Activated naive CD4-positive, alpha-beta T cell treated with anti-CD3 and anti-CD28 coated beads, Interleukin-2, amount 10 ng/mL, durations not matched to agents 7 days and 5 days (primary cell): ENCODE measurements at regions of chr15 and their contacts with region 1.

Region 1: GRCh38 chr15:44711356-44712107 is at the start of gene B2M:
- DNase-seq: peak; percentile 95
- H3K4me3 Mint-ChIP-seq: peak within 1 kb of the TSS; percentile 99
- H3K27ac Mint-ChIP-seq: peak within 1 kb of the TSS; percentile 100
- H3K4me1 Mint-ChIP-seq: peaks cover 47% of the 10 kb centered on the region
- H3K27me3 Mint-ChIP-seq: peaks cover 18% of the 10 kb centered on the region

Region 2: GRCh38 chr15:44682211-44682610 is 29.3 kb before region 1 on chr15:
- CTCF ChIA-PET with region 1: interaction called, 25 read pairs
- DNase-seq: no peak
- H3K4me3 Mint-ChIP-seq: peak overlapping the region; percentile 59
- H3K27ac Mint-ChIP-seq: peak overlapping the region; percentile 95
- H3K4me1 Mint-ChIP-seq: peaks cover 89% of the 10 kb centered on the region
- H3K27me3 Mint-ChIP-seq: no peaks in the 10 kb centered on the region

Region 3: GRCh38 chr15:44728576-44729407 is 17.3 kb after region 1 on chr15:
- CTCF ChIA-PET with region 1: interaction called, 282 read pairs
- DNase-seq: peak; percentile 96
- H3K4me3 Mint-ChIP-seq: peak overlapping the region; percentile 99
- H3K27ac Mint-ChIP-seq: peak overlapping the region; percentile 99
- H3K4me1 Mint-ChIP-seq: peaks cover 81% of the 10 kb centered on the region
- H3K27me3 Mint-ChIP-seq: no peaks in the 10 kb centered on the region